ENCODE measurements at regions of chr15 and their contacts with region 1.

Region 1: DNA sequence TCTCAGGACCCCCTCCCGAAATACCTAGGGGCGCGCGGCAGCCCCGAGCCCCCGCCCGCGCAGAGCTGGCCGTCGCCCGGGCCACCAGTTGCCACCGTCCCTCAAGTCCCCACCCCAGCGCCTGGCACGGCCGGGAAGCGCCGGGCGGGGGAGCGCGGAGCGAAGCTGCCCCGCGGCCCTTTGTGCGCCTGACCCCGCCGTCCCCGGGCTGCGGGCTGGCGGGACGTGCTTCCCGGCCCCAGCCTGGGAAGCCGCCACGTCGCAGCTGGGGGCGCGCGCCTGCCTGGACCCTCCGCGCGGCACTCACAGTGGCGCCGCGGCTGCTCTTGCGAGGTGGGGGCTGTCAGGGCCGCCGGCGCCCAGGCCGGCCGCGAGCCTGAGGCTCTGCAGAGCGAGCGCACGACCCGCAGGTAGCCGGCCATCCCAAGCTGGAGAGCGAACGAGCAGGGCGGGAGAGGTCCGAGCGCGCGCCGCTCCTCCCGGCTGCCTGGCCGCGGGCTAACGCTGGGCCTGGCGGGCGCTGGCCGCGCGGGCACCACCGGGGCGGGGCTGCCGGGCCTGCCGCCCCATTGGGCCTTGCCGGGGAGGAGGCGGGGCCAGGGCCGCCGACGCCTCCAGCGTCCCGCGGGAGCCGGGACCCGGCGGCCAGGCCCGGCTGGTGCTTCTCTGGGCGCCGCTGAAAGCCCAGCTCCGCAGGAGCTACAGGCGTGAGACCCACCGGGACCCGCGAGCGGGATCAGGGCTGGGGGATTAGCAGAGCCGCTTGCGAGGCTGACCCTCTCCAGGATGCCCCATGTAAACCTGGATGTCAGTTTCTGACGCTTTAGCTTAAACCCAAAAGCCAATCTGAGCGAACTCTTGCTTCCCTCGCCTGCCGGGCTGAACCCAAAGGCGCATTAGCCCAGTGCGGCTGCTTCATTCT is at the start of gene IDH2:
- DNase-seq: peak; percentile 89
- H3K4me3 ChIP-seq: peak within 1 kb of the TSS; percentile 67 to 95 (median 78)
- H3K27ac ChIP-seq: peak within 1 kb of the TSS; percentile 94 to 100 (median 98)
- H3K4me1 ChIP-seq: peaks cover 0 to 83% (median 79%) of the 10 kb centered on the region in 4 donors
- H3K27me3 ChIP-seq: no peaks in the 10 kb centered on the region
- CTCF ChIP-seq: no peak
- EP300 ChIP-seq: no peak
- POLR2A ChIP-seq: peak; percentile 76 to 82
- total RNA-seq, gene IDH2: 77.2 to 164 (median 116) TPM

Region 2: DNA sequence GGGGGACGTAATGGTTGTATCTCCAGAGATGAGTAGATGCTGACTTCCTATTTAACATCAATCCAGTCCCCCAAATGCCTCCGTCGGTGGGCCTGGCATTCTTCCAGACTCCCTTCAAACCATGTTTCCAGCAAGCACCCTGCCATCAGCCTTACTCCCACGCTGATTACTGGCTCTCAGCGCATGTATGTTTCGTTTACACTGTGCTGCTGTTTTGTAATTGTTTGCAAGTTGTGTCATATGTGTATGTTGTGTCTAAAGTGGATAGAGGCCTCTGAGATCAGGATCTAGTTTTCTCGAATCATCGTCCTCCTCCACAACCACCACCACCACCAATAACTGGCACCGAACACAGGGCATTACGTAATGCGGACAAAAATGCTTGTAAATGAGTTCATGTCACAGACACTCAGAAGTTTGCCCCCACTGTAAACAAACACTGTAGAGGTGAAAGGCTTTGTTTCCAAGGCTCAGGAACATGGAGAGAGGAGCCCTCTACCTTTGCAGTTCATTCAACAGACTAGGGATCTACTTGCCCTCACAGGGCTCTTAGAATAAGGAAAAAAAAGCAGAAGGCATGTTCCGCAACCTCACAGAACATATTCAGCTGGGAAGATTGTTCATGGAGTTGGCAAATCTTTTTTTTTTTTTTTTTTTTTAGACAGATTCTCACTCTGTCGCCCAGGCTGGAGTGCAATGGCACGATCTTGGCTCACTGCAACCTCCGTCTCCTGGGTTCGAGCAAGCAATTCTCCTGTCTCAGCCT is 52.8 kb after region 1 on chr15:
- intact Hi-C with region 1: loop called (anchors 5 kb)
- DNase-seq: peak; percentile 78
- H3K4me3 ChIP-seq: no peak overlapping the region
- H3K27ac ChIP-seq: peak overlapping the region; percentile 17 to 72 (median 64)
- H3K4me1 ChIP-seq: peaks cover 0 to 51% (median 36%) of the 10 kb centered on the region in 4 donors
- H3K27me3 ChIP-seq: no peaks in the 10 kb centered on the region
- CTCF ChIP-seq: no peak
- EP300 ChIP-seq: no peak
- POLR2A ChIP-seq: no peak

Region 3: GRCh38 chr15:91426412-91426811 is 1324.2 kb after region 1 on chr15:
- intact Hi-C with region 1: no loop called
- DNase-seq: no peak
- H3K4me3 ChIP-seq: no peak overlapping the region
- H3K27ac ChIP-seq: no peak overlapping the region
- H3K4me1 ChIP-seq: no peaks in the 10 kb centered on the region
- H3K27me3 ChIP-seq: no peaks in the 10 kb centered on the region
- CTCF ChIP-seq: no peak
- EP300 ChIP-seq: no peak
- POLR2A ChIP-seq: no peak

Measured in sigmoid colon (tissue), 7 donors.